ENCODE measurements at regions of chr4 and their contacts with region 1.

Region 1: GRCh38 chr4:47383829-47384427 is 79.6 kb downstream of the COMMD8 start:
- DNase-seq: peak; percentile 40
- CTCF ChIP-seq: peak; percentile 52

Region 2: GRCh38 chr4:46931981-46932380 is 451.9 kb before region 1 on chr4:
- in situ Hi-C with region 1: loop called (anchors 25 kb)
- DNase-seq: no peak
- CTCF ChIP-seq: peak; percentile 74

Region 3: DNA sequence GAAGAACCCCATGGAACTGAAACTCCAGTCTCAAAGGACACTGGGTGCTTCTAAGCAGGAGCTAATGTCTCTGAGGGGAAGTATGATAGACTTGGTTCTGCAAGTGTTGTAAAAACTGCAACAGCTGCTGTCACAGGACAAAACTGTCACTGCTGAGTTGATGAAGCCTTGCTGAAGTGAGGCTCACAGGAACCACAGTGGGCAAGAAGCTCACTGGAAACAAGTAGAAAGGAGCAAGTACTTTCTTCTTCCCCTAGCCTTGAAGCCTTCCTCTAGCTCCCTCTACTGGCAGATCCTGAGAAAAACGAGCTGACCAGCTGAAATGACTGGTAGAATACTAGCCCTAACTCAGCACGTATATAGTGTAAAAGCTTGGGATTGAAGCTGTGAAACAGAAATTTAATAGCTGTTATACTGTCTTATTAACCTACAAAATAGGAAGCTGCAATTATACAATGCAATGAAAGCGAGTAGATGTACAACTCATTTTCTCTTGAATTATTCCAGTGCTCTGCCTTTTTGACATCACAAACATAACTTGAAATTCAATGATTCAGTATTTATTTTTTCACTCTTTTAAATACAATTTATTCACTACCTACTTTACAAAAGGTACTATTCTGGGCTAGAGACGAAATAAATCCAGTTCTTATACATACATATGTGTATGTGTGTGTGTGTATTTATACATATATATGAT is 261.2 kb before region 1 on chr4:
- in situ Hi-C with region 1: loop called (anchors 25 kb)
- DNase-seq: peak; percentile 61
- CTCF ChIP-seq: peak; percentile 90

Measured in GM13977 (cell line).